A673 (cell line): ENCODE measurements at regions of chr21 and their contacts with region 1.

Region 1: DNA sequence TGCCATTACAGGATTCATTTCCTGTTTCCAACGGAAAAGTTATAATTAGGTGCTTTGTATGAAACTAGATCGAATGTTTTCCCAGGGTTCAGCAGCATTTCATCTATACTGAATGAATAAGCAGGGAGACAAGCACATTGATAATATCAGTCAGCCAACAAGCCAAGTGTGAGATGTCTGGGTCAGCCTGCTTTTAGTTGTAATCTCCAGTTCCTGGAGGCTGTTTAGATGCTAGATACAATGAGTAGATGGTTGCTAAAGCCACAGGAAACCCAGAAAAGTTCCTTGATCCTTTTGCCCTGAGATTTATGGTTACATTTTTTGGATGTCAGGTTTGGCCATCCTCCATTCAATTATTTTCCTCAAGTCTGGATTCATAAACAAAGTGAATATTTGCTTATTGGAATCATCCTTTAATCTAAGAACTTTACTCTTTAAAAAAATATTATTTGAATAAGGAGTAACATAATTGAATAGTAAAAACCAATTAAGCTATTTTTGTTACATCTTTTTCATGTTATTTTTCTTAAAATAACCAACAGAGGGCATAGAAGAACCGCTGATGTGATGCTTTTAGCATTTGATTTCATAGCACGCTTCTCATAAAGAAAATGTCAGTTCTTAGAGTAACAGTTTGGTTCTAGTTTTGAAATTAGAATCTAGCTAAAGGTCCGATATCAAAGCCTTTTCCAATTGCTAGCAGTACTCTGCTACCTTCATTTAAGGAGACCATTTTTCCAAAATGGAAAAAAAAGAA is 76.6 kb downstream of the HSPA13 start:
- DNase-seq: peak; percentile 52
- H3K4me3 ChIP-seq: no peak overlapping the region
- H3K27ac ChIP-seq: no peak overlapping the region
- H3K4me1 ChIP-seq: peaks cover 15% of the 10 kb centered on the region
- H3K27me3 ChIP-seq: no peaks in the 10 kb centered on the region
- CTCF ChIP-seq: peak; percentile 64; the same call in 1 of the 2 replicates

Region 2: DNA sequence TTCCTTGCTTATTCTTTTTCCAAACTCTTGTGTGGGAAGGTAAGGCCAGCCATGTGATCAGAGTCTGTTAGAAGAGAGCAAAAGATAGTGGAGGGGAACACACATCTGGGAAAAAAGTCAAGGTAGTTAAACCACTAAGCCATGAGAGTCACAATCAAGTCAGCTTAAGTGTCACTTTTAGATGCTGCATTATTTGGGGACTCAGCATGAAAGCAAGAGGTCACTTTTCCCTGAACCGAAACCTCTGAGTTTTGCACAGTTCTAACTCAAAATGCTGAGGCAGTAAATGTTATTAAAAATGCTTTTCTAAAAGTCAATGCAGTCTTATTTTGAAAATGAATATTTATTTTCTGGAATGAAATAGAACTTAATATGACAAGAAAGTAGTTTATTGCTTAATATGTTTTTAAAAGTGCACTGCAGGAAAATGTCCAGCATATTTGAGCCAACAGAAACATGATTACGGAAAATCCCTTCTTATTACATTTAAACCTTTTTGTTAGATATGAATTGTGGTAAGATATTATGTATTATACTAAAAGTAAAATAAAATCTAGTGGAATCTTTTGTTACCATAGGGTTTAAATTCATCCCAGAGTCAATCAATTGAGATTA is 21.1 kb before region 1 on chr21:
- CTCF ChIA-PET with region 1: interaction called, 13 read pairs
- POLR2A ChIA-PET with region 1: no interaction called
- intact Hi-C with region 1: no loop called
- DNase-seq: no peak
- H3K4me3 ChIP-seq: no peak overlapping the region
- H3K27ac ChIP-seq: no peak overlapping the region
- H3K4me1 ChIP-seq: peaks cover 7% of the 10 kb centered on the region
- H3K27me3 ChIP-seq: no peaks in the 10 kb centered on the region
- CTCF ChIP-seq: no peak

Region 3: DNA sequence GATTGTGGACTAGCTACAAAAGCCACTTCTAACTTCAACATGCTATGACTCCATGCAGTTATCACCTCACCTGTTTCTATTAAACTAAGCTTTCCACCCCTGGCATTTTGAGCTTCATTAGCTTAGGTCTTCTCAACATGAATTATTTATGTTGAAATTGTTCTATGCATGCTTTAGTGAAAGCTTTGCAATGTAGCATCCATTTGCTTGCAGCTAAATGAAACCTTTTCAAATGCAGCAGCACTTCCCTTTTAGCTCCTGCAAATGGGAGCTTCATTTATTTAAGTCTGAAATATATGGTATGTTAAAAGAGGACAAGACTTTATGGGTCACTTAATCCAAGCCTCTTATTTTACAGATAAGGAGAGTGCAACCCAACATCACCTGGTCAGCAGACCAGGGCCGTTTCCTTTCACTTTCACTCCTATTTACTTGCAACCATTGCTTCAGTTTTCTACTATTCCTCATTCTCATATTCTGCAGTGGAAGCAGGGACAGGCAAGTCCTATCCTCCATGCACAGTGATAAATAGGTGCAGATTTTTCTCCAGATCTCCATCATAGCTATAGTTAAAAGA is 296.1 kb after region 1 on chr21:
- CTCF ChIA-PET with region 1: no interaction called
- POLR2A ChIA-PET with region 1: no interaction called
- intact Hi-C with region 1: no loop called
- DNase-seq: no peak
- H3K4me3 ChIP-seq: no peak overlapping the region
- H3K27ac ChIP-seq: no peak overlapping the region
- H3K4me1 ChIP-seq: no peaks in the 10 kb centered on the region
- H3K27me3 ChIP-seq: no peaks in the 10 kb centered on the region
- CTCF ChIP-seq: no peak

Region 4: DNA sequence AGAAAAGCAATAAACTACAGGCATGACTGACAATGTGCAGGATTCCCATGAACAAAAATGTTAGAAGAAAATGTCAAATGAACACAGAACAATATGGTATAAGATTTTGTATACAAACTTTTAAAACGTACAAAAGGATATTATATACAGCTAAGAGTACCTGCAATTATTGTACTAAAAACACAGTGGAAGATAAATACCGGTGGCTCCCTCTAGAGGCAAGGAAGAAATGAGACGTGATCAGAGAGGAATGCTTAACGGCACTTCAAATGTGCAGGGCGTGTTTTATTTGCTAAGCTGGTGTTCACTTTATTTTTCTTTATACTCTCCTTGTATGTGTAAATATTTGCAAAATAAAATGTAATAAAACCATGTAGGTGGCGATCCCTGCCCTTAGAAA is 431.6 kb after region 1 on chr21:
- CTCF ChIA-PET with region 1: interaction called, 5 read pairs
- POLR2A ChIA-PET with region 1: no interaction called
- intact Hi-C with region 1: loop called (anchors 5 kb)
- DNase-seq: peak; percentile 69
- H3K4me3 ChIP-seq: no peak overlapping the region
- H3K27ac ChIP-seq: no peak overlapping the region
- H3K4me1 ChIP-seq: no peaks in the 10 kb centered on the region
- H3K27me3 ChIP-seq: no peaks in the 10 kb centered on the region
- CTCF ChIP-seq: peak; percentile 84

Region 5: GRCh38 chr21:14773777-14774345 is 467.5 kb after region 1 on chr21:
- CTCF ChIA-PET with region 1: no interaction called
- POLR2A ChIA-PET with region 1: no interaction called
- intact Hi-C with region 1: loop called (anchors 5 kb)
- DNase-seq: peak; percentile 59
- H3K4me3 ChIP-seq: no peak overlapping the region
- H3K27ac ChIP-seq: no peak overlapping the region
- H3K4me1 ChIP-seq: no peaks in the 10 kb centered on the region
- H3K27me3 ChIP-seq: no peaks in the 10 kb centered on the region
- CTCF ChIP-seq: peak; percentile 75